Naive thymus-derived CD8-positive, alpha-beta T cell (primary cell): ENCODE measurements at regions of chr1 and their contacts with region 1.

Region 1: GRCh38 chr1:156728597-156729462 is at the start of gene ISG20L2:
- DNase-seq: peak; percentile 86 to 98 (median 95)
- ATAC-seq: peak; percentile 87 to 92
- H3K4me3 Mint-ChIP-seq: no peak within 1 kb of the TSS
- H3K27ac Mint-ChIP-seq: peak within 1 kb of the TSS in 5 of 10 donors; percentile 95 to 99 (median 98)
- H3K4me1 Mint-ChIP-seq: peaks cover 12 to 26% (median 19%) of the 10 kb centered on the region in 4 donors
- H3K27me3 Mint-ChIP-seq: no peaks in the 10 kb centered on the region
- polyA plus RNA-seq, gene ISG20L2: 20.0 to 23.4 (median 20.7) TPM

Region 2: GRCh38 chr1:156689035-156689952 is 39.5 kb before region 1 on chr1:
- POLR2A ChIA-PET with region 1: interaction called, 22 read pairs
- DNase-seq: peak; percentile 63 to 89 (median 76)
- ATAC-seq: peak; percentile 97
- H3K4me3 Mint-ChIP-seq: peak overlapping the region in 9 of 10 donors; percentile 13 to 87 (median 59)
- H3K27ac Mint-ChIP-seq: peak overlapping the region in 5 of 10 donors; percentile 71 to 87 (median 82)
- H3K4me1 Mint-ChIP-seq: peaks cover 18 to 36% (median 29%) of the 10 kb centered on the region in 4 donors
- H3K27me3 Mint-ChIP-seq: peaks cover 21 to 59% (median 37%) of the 10 kb centered on the region in 5 donors

Region 3: GRCh38 chr1:156705918-156706656 is 22.7 kb before region 1 on chr1:
- POLR2A ChIA-PET with region 1: interaction called, 33 read pairs
- DNase-seq: peak; percentile 55 to 84 (median 75)
- ATAC-seq: peak; percentile 68 to 77
- H3K4me3 Mint-ChIP-seq: peak overlapping the region; percentile 85 to 98 (median 91)
- H3K27ac Mint-ChIP-seq: peak overlapping the region; percentile 53 to 95 (median 91)
- H3K4me1 Mint-ChIP-seq: peaks cover 13 to 35% (median 32%) of the 10 kb centered on the region in 4 donors
- H3K27me3 Mint-ChIP-seq: peaks cover 0 to 18% (median 13%) of the 10 kb centered on the region in 5 donors

Region 4: GRCh38 chr1:156740679-156741612 is 12.1 kb after region 1 on chr1 and contains the start of gene MRPL24:
- POLR2A ChIA-PET with region 1: interaction called, 52 read pairs
- DNase-seq: peak; percentile 85 to 99 (median 96)
- ATAC-seq: peak; percentile 87 to 89
- H3K4me3 Mint-ChIP-seq: peak within 1 kb of the TSS; percentile 92 to 99 (median 96)
- H3K27ac Mint-ChIP-seq: peak within 1 kb of the TSS; percentile 94 to 99 (median 98)
- H3K4me1 Mint-ChIP-seq: peaks cover 18 to 47% (median 45%) of the 10 kb centered on the region in 4 donors
- H3K27me3 Mint-ChIP-seq: no peaks in the 10 kb centered on the region
- polyA plus RNA-seq, gene MRPL24: 98.6 to 109 (median 103) TPM

Region 5: GRCh38 chr1:156751758-156752757 is 23.2 kb after region 1 on chr1:
- POLR2A ChIA-PET with region 1: interaction called, 48 read pairs
- DNase-seq: peak; percentile 85 to 98 (median 94)
- ATAC-seq: peak; percentile 78 to 86
- H3K4me3 Mint-ChIP-seq: peak overlapping the region; percentile 86 to 94 (median 90)
- H3K27ac Mint-ChIP-seq: peak overlapping the region; percentile 82 to 94 (median 94)
- H3K4me1 Mint-ChIP-seq: peaks cover 32 to 60% (median 50%) of the 10 kb centered on the region in 4 donors
- H3K27me3 Mint-ChIP-seq: no peaks in the 10 kb centered on the region

Region 6: DNA sequence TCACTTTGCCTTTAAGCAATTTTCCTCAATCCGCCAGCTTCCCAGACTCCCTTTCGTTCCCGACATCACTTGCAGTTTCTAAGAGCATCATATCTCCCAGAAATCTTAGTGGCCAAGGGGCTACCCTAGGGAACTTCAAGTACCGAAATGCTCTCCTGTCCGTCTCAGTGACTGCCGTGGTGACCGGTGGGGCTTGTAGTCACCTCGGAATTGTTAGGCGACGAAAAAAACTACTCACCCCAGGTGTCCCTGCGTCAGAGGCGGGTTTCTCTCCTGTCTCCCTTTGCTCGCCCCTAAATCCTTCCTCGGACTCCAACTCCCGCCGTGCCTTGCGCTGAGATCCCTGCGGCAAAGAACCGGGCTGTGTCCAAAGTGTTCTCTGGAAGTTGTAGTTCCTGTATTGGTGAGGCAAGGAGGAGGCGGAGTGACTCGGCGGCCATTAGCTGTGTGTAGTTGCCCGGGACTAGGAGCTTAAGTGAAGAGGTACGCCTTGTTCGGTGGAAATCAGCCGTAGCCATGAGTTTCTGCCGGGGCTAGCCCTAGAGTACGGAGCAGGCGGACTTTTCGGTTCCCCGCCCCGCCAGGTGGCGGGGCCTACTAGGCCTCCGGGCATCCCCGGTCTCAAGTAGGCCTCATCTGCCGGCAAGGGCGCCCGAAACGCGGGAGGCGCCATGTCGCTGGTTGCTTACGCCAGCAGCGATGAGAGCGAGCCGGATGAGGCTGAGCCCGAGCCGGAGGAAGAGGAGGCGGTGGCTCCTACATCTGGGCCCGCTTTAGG is 38.5 kb after region 1 on chr1 and contains the start of gene PRCC:
- POLR2A ChIA-PET with region 1: interaction called, 35 read pairs
- DNase-seq: peak; percentile 83 to 99 (median 98)
- ATAC-seq: peak; percentile 92 to 93
- H3K4me3 Mint-ChIP-seq: no peak within 1 kb of the TSS
- H3K27ac Mint-ChIP-seq: peak within 1 kb of the TSS in 1 of 10 donors; percentile 71
- H3K4me1 Mint-ChIP-seq: peaks cover 25 to 40% (median 37%) of the 10 kb centered on the region in 4 donors
- H3K27me3 Mint-ChIP-seq: no peaks in the 10 kb centered on the region
- polyA plus RNA-seq, gene PRCC: 22.9 to 55.7 (median 39.9) TPM

Region 7: GRCh38 chr1:156781585-156782186 is 52.9 kb after region 1 on chr1:
- POLR2A ChIA-PET with region 1: no interaction called
- DNase-seq: no peak
- ATAC-seq: no peak
- H3K4me3 Mint-ChIP-seq: no peak overlapping the region
- H3K27ac Mint-ChIP-seq: peak overlapping the region in 4 of 10 donors; percentile 13 to 56 (median 36)
- H3K4me1 Mint-ChIP-seq: peaks cover 22 to 42% (median 33%) of the 10 kb centered on the region in 4 donors
- H3K27me3 Mint-ChIP-seq: no peaks in the 10 kb centered on the region

Region 8: DNA sequence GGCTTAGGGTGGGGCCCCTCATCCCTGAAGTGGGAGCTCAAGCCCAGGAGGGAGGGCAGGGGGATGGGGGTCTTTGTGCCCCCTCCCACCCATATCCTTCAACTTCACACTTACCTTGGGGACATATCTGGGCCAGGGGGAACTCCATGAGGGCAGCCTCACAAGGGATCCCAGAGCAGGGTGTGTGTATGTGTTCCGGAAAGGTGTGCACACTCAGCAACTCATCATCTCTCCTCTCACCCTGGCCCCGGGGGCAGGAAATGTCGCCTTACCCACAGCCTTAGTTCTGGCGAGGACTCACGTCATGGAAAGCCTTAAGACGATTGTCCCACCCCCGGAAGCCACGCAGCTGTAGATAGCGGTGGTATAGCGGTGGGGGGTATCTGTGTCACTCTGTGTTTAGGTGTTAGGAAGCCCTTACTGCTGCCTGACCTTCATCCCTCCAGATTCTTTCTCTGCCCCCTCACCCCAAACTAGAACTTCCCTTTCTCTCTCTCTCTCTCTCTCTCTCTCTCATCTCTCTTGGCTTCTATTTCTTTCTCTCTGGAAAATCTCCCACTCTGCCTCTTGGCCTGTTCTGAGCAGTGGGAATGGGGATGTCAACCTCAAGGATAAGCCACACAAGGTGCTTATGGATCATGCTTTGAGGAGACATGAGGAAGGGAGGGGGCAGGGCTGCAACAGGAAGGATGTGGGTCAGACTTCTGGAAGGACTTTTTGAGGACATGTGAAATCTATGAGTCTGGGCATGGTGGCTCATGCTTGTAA is 87.9 kb after region 1 on chr1 and contains the start of gene SH2D2A:
- POLR2A ChIA-PET with region 1: interaction called, 11 read pairs
- DNase-seq: peak; percentile 84 to 99 (median 96)
- ATAC-seq: peak; percentile 86 to 90
- H3K4me3 Mint-ChIP-seq: peak within 1 kb of the TSS; percentile 79 to 94 (median 90)
- H3K27ac Mint-ChIP-seq: peak within 1 kb of the TSS; percentile 95 to 100 (median 98)
- H3K4me1 Mint-ChIP-seq: peaks cover 35 to 63% (median 56%) of the 10 kb centered on the region in 4 donors
- H3K27me3 Mint-ChIP-seq: peaks cover 0 to 8% (median 0%) of the 10 kb centered on the region in 5 donors
- polyA plus RNA-seq, gene SH2D2A: 23.6 to 31.5 (median 25.6) TPM